ENCODE measurements at regions of chr5 and their contacts with region 1.

Region 1: GRCh38 chr5:142548739-142549275 is 137.1 kb downstream of the FGF1 start:
- DNase-seq: no peak
- H3K4me3 ChIP-seq: no peak overlapping the region
- H3K27ac ChIP-seq: no peak overlapping the region
- H3K4me1 ChIP-seq: peaks cover 0 to 17% (median 3%) of the 10 kb centered on the region in 3 donors
- H3K27me3 ChIP-seq: peaks cover 0 to 30% (median 0%) of the 10 kb centered on the region in 4 donors
- CTCF ChIP-seq: peak; percentile 54 to 82 (median 68)
- POLR2A ChIP-seq: no peak

Region 2: GRCh38 chr5:142151436-142152383 is 397.1 kb before region 1 on chr5:
- intact Hi-C with region 1: loop called (anchors 5 kb)
- DNase-seq: no peak
- H3K4me3 ChIP-seq: no peak overlapping the region
- H3K27ac ChIP-seq: no peak overlapping the region
- H3K4me1 ChIP-seq: no peaks in the 10 kb centered on the region
- H3K27me3 ChIP-seq: no peaks in the 10 kb centered on the region
- CTCF ChIP-seq: peak; percentile 45 to 90 (median 79)
- POLR2A ChIP-seq: no peak

Region 3: DNA sequence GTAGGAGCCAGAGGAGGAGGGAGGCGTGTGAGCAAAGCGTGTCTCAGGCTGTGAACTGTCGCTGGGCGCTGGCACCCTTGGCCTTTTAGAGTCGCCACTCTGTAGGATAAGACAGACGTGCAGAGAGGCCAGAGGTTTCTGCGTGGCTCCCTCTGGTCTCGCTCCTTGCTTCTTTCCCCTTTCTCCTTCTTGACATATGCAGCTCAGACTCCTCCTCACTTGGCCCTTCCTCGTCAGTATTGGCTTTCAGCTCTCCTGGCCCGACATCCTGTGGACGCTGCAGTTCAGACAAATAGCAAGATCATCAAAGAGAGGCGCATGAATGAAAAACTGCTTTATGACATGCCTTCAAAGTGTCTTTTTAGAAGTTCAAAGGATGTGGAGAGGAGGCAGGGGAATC is 107.2 kb before region 1 on chr5:
- intact Hi-C with region 1: no loop called
- DNase-seq: no peak
- H3K4me3 ChIP-seq: no peak overlapping the region
- H3K27ac ChIP-seq: peak overlapping the region in 1 of 4 donors; percentile 10
- H3K4me1 ChIP-seq: peaks cover 0 to 19% (median 3%) of the 10 kb centered on the region in 3 donors
- H3K27me3 ChIP-seq: no peaks in the 10 kb centered on the region
- CTCF ChIP-seq: no peak
- POLR2A ChIP-seq: no peak

Region 4: GRCh38 chr5:142618130-142618523 is 69.3 kb after region 1 on chr5:
- intact Hi-C with region 1: no loop called
- DNase-seq: no peak
- H3K4me3 ChIP-seq: no peak overlapping the region
- H3K27ac ChIP-seq: no peak overlapping the region
- H3K4me1 ChIP-seq: no peaks in the 10 kb centered on the region
- H3K27me3 ChIP-seq: no peaks in the 10 kb centered on the region
- CTCF ChIP-seq: no peak
- POLR2A ChIP-seq: no peak